MCF 10A (cell line): ENCODE measurements at regions of chr14 and their contacts with region 1.

Region 1: DNA sequence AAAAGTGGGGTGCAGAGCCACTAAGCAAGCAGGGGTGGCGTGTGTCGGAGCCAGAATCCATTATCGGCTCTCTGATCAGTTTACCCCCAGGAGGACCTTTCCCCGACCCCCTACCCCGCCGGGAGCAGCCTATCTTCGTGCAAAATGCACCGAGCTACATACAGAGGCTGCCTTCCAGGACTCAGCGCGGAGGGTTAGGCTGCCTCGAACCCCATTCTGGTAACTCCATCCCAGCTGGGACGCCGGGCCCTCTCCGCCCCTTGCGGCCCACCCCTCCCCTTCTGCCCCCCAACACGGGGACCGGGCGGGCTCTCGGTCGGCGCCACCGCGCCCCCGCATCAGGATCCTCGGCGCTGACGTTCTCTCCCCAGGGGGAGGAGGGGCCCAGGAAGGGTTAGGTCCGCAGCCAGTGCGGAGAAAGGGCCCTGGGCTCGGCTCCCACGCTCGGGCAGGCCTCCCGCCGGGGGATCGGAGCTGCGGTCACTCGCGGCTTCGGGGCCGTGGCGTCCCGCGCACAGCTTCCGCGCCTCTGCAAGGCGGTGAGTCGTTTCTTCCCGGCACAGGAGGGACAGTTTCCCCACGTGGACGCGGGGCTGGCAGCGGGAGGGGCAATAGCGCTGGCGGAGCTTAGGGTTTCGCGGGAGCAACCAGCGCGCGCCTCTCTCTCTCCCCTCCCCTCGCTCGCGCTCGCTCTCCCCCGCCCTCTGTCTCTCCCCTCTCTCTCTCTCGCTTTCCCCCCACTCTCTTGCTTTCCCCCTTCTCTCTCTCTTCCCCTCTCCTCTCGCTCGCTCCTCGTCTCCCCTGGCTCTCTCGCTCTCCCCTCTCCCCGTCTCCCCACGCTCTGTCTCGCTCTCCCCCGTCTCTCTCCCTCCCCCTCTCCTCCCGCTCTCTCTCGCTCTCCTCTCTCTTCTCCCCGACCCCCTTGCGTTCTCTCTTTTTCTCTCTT is 12.5 kb upstream of the MAP3K9 start:
- DNase-seq: peak; percentile 50
- H3K4me3 Mint-ChIP-seq: peak overlapping the region; percentile 76
- H3K27ac Mint-ChIP-seq: peak overlapping the region; percentile 19
- H3K4me1 Mint-ChIP-seq: no peaks in the 10 kb centered on the region
- H3K27me3 Mint-ChIP-seq: no peaks in the 10 kb centered on the region
- CTCF ChIP-seq: no peak

Region 2: DNA sequence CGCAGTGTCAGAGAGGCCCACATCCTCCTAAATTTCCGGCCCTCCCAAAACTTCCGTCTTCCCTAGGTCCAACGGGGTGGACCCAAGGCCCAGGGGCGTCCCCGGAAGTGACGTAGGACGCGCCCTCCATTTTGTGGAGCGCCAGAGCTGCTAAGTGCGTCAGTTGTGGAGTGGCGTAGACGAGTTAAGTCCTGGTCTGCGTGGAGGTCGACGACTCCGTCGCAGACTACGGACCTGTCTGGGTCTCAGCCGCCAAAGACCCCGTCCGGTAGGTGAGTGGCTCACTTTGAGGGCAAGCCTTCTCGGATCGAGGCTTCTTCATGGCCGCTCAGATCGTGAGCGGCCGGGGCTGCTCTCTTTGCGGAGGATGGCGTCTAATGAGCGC is 1054.9 kb before region 1 on chr14 and contains the start of gene SRSF5:
- CTCF ChIA-PET with region 1: no interaction called
- POLR2A ChIA-PET with region 1: no interaction called
- intact Hi-C with region 1: no loop called
- DNase-seq: peak; percentile 97
- H3K4me3 Mint-ChIP-seq: peak within 1 kb of the TSS; percentile 92
- H3K27ac Mint-ChIP-seq: peak within 1 kb of the TSS; percentile 100
- H3K4me1 Mint-ChIP-seq: peaks cover 14% of the 10 kb centered on the region
- H3K27me3 Mint-ChIP-seq: no peaks in the 10 kb centered on the region
- CTCF ChIP-seq: no peak
- total RNA-seq, gene SRSF5: 281 and 316 TPM in 2 replicates

Region 3: DNA sequence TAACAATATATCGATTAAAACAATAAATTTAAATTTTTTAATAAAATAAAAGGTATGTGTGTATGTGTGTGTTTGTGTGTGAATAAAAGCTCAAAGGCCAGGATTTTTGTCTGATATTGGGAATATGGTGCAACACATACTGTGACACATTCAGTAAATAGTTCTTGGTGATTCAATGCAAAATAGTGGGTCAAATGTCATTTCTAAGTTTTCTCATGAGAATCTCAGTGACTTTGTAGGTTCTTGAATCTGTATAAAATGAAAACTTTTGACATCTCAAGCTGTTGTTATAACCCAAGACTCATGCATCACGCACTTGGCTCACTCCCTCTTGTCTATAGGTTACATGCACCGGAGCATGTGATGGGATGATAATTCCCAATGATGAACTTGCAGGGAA is 205.2 kb before region 1 on chr14:
- CTCF ChIA-PET with region 1: interaction called, 42 read pairs
- POLR2A ChIA-PET with region 1: no interaction called
- intact Hi-C with region 1: no loop called
- DNase-seq: no peak
- H3K4me3 Mint-ChIP-seq: no peak overlapping the region
- H3K27ac Mint-ChIP-seq: no peak overlapping the region
- H3K4me1 Mint-ChIP-seq: no peaks in the 10 kb centered on the region
- H3K27me3 Mint-ChIP-seq: no peaks in the 10 kb centered on the region
- CTCF ChIP-seq: no peak

Region 4: GRCh38 chr14:70754989-70755388 is 66.9 kb before region 1 on chr14:
- CTCF ChIA-PET with region 1: interaction called, 14 read pairs
- POLR2A ChIA-PET with region 1: interaction called, 7 read pairs
- intact Hi-C with region 1: no loop called
- DNase-seq: peak; percentile 94
- H3K4me3 Mint-ChIP-seq: no peak overlapping the region
- H3K27ac Mint-ChIP-seq: peak overlapping the region; percentile 89
- H3K4me1 Mint-ChIP-seq: peaks cover 24% of the 10 kb centered on the region
- H3K27me3 Mint-ChIP-seq: no peaks in the 10 kb centered on the region
- CTCF ChIP-seq: no peak

Region 5: DNA sequence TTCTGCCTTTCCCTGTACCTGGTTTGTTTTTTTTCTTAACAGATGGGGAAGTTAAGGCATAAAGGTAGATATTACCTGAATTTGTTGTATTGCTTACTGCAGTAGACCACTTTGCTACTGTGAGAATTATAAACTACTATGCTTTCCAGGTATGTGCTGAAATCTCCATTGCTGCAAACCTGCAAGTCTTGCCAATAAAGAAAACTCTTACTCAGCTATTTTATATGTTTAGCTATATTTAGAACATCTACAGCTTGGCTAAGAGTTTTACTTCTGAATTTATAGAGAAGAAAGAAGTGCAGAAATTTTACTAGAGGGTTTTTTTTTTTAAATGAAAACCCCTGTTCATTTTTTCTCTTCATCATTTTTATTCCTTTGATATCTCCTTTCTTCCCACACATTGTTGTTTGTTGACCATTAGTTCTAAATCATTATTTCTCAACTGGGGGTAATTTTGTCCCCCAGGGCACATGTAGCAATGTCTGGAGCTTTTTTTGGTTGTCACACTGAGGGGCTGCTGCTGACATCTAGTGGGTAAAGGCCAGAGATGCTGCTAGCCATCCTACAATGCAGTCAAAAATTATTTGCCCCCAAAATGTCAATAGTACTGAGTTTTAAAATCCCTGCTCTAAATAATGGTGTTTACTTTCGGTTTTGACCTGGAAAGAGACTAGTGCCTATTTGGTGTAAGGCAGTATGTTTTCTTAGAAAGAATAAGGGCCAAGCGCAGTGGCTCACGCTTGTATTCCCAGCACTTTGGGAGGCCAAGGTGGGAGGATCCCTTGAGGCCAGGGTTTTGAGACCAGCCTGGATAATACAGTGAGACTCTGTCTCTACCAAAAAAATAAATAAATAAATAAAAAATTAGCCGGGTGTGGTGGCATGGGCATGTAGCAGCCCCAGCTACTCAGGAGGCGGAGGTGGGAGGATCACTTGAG is 134.0 kb after region 1 on chr14:
- CTCF ChIA-PET with region 1: interaction called, 16 read pairs
- POLR2A ChIA-PET with region 1: no interaction called
- intact Hi-C with region 1: loop called (anchors 1 kb)
- DNase-seq: peak; percentile 57
- H3K4me3 Mint-ChIP-seq: no peak overlapping the region
- H3K27ac Mint-ChIP-seq: no peak overlapping the region
- H3K4me1 Mint-ChIP-seq: peaks cover 6% of the 10 kb centered on the region
- H3K27me3 Mint-ChIP-seq: no peaks in the 10 kb centered on the region
- CTCF ChIP-seq: peak; percentile 52

Region 6: GRCh38 chr14:71175450-71175849 is 353.6 kb after region 1 on chr14:
- CTCF ChIA-PET with region 1: no interaction called
- POLR2A ChIA-PET with region 1: no interaction called
- intact Hi-C with region 1: no loop called
- DNase-seq: peak; percentile 86
- H3K4me3 Mint-ChIP-seq: no peak overlapping the region
- H3K27ac Mint-ChIP-seq: no peak overlapping the region
- H3K4me1 Mint-ChIP-seq: no peaks in the 10 kb centered on the region
- H3K27me3 Mint-ChIP-seq: no peaks in the 10 kb centered on the region
- CTCF ChIP-seq: no peak